PC-3 (cell line): ENCODE measurements at regions of chr4 and their contacts with region 1.

Region 1: DNA sequence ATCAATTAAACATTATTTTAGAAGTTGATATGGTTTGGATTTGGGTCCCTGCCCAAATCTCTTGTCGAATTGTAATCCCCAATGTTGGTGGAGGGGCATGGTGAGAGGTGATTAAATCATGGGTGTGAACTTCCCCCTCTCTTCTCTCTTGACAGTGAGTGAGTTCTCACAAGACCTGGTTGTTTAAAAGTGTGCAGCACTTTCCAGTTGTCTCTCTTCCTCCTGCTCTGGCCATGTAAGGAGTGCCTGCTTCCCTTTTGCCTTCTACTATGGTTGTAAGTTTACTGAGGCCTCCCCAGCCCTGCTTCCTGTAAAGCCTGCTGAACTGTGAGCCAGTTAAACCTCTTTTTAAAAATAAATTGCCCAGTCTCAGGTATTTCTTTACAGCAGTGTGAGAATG is 141.4 kb downstream of the GALNTL6 start:
- DNase-seq: no peak
- ATAC-seq: no peak
- H3K4me3 ChIP-seq: no peak overlapping the region
- H3K27ac ChIP-seq: no peak overlapping the region
- H3K4me1 ChIP-seq: no peaks in the 10 kb centered on the region
- H3K27me3 ChIP-seq: no peaks in the 10 kb centered on the region
- CTCF ChIP-seq: no peak

Region 2: GRCh38 chr4:171924746-171925376 is 29.8 kb before region 1 on chr4:
- CTCF ChIA-PET with region 1: no interaction called
- POLR2A ChIA-PET with region 1: no interaction called
- intact Hi-C with region 1: loop called (anchors 1 kb)
- DNase-seq: no peak
- ATAC-seq: no peak
- H3K4me3 ChIP-seq: no peak overlapping the region
- H3K27ac ChIP-seq: no peak overlapping the region
- H3K4me1 ChIP-seq: no peaks in the 10 kb centered on the region
- H3K27me3 ChIP-seq: no peaks in the 10 kb centered on the region
- CTCF ChIP-seq: no peak

Region 3: GRCh38 chr4:171940656-171941055 is 14.0 kb before region 1 on chr4:
- CTCF ChIA-PET with region 1: no interaction called
- POLR2A ChIA-PET with region 1: no interaction called
- intact Hi-C with region 1: no loop called
- DNase-seq: no peak
- ATAC-seq: no peak
- H3K4me3 ChIP-seq: no peak overlapping the region
- H3K27ac ChIP-seq: no peak overlapping the region
- H3K4me1 ChIP-seq: no peaks in the 10 kb centered on the region
- H3K27me3 ChIP-seq: no peaks in the 10 kb centered on the region
- CTCF ChIP-seq: no peak

Region 4: GRCh38 chr4:172018358-172018757 is 63.7 kb after region 1 on chr4:
- CTCF ChIA-PET with region 1: no interaction called
- POLR2A ChIA-PET with region 1: no interaction called
- intact Hi-C with region 1: no loop called
- DNase-seq: no peak
- ATAC-seq: no peak
- H3K4me3 ChIP-seq: no peak overlapping the region
- H3K27ac ChIP-seq: no peak overlapping the region
- H3K4me1 ChIP-seq: no peaks in the 10 kb centered on the region
- H3K27me3 ChIP-seq: no peaks in the 10 kb centered on the region
- CTCF ChIP-seq: no peak